IMR-90 (cell line): ENCODE measurements at regions of chr19 and their contacts with region 1.

Region 1: DNA sequence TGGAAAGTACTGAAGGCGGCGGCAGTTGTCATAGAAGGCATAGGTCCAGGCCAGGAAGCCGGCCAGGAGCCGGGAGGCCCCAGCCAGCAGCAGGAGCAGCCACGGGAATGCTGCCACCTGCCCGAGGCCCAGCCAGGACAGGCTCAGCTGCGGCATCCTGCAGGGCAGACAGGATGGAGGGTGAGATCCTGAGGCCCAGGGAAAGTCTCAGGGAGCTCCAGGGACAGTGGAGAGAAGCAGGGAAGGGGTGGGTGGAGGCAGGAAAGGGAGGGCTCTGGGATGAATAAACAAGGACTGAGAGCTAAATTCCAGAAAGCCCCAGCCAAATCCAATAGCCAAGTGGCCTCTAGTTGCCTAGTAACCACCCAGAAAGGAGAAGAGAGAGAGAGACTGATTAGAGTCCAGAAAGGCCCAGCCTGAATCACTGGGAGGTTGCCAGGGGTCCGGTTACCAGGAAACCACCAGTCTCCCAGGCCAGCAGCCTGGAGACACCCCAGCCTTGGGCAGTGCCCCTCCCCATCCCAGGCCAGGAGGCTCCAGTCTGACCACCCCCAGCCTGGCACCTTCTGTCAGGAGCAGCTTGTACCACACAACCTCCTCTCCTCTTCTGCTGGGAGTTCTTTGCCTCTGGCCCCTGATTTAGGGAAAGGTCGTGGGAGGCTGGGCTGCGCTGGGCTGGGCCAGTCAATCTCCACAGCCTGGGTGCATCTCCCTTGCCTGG is 7.5 kb upstream of the OR10H5 start:
- DNase-seq: no peak
- ATAC-seq: no peak
- H3K4me3 ChIP-seq: no peak overlapping the region
- H3K27ac ChIP-seq: no peak overlapping the region
- H3K4me1 ChIP-seq: no peaks in the 10 kb centered on the region
- H3K27me3 ChIP-seq: no peaks in the 10 kb centered on the region
- CTCF ChIP-seq: no peak
- POLR2A ChIP-seq: no peak
- RAD21 ChIP-seq: no peak

Region 2: DNA sequence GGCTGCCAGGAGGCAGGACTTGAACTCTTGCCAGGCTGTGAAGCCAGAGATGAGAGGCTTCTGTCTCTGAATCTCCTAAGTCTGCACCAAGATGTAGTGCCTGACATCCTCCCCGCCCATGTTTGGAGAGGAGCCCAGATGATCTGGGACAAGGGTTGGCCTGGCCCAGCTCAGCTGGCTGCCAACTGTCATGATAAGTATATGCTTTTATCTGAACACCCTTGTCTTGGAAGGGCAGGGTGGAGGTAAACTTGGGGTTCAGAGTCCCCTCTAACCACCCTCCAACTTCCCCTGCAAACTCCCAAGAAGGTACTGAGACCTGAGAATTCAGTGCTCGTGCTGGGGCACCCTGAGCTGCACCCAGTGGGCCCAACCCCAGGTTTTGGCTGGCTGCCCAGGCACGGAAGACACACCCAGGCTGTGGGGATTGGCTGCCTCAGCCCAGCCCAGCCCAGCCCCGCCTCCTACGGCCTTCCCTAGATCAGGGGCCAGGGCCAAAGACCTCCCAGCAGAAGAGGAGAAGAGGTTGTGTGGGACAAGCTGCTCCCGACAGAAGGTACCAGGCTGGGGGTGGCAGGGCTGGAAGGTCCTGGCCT is 107.2 kb before region 1 on chr19 and contains the start of gene CYP4F12:
- CTCF ChIA-PET with region 1: no interaction called
- POLR2A ChIA-PET with region 1: no interaction called
- dilution Hi-C with region 1: no loop called
- in situ Hi-C with region 1: loop called (anchors 10 kb)
- intact Hi-C with region 1: loop called (anchors 2 kb)
- DNase-seq: no peak
- ATAC-seq: no peak
- H3K4me3 ChIP-seq: no peak within 1 kb of the TSS
- H3K27ac ChIP-seq: no peak within 1 kb of the TSS
- H3K4me1 ChIP-seq: no peaks in the 10 kb centered on the region
- H3K27me3 ChIP-seq: no peaks in the 10 kb centered on the region
- CTCF ChIP-seq: no peak
- POLR2A ChIP-seq: no peak
- RAD21 ChIP-seq: no peak
- total RNA-seq, gene CYP4F12: not detected in 2 replicates

Region 3: GRCh38 chr19:15976836-15977689 is 197.1 kb after region 1 on chr19:
- CTCF ChIA-PET with region 1: no interaction called
- POLR2A ChIA-PET with region 1: no interaction called
- dilution Hi-C with region 1: no loop called
- in situ Hi-C with region 1: no loop called
- intact Hi-C with region 1: no loop called
- DNase-seq: no peak
- ATAC-seq: no peak
- H3K4me3 ChIP-seq: no peak overlapping the region
- H3K27ac ChIP-seq: no peak overlapping the region
- H3K4me1 ChIP-seq: no peaks in the 10 kb centered on the region
- H3K27me3 ChIP-seq: no peaks in the 10 kb centered on the region
- CTCF ChIP-seq: no peak
- POLR2A ChIP-seq: no peak
- RAD21 ChIP-seq: no peak